ENCODE measurements at regions of chr1 and their contacts with region 1.

Region 1: DNA sequence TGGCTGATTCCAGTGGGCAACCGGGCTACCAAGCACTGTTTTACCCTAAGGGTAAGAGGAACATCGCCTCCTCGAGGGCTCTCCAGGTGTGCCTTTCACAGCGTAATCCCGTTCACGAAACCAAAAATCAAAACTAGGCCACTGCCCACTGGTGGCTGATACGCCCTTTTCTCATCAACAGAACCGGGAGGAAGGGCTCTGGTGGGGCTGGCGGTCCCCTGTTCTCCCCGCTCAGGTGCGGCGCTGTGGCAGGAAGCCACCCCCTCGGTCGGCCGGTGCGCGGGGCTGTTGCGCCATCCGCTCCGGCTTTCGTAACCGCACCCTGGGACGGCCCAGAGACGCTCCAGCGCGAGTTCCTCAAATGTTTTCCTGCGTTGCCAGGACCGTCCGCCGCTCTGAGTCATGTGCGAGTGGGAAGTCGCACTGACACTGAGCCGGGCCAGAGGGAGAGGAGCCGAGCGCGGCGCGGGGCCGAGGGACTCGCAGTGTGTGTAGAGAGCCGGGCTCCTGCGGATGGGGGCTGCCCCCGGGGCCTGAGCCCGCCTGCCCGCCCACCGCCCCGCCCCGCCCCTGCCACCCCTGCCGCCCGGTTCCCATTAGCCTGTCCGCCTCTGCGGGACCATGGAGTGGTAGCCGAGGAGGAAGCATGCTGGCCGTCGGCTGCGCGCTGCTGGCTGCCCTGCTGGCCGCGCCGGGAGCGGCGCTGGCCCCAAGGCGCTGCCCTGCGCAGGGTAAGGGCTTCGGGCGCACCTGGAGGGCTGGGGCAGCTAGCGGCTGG is at the start of gene IL6R:
- DNase-seq: peak in 1 of 2 donors; percentile 97
- H3K4me3 ChIP-seq: peak within 1 kb of the TSS; percentile 55 to 79
- H3K27ac ChIP-seq: peak within 1 kb of the TSS; percentile 95
- H3K4me1 ChIP-seq: peaks cover 45% of the 10 kb centered on the region
- H3K27me3 ChIP-seq: no peaks in the 10 kb centered on the region
- CTCF ChIP-seq: peak in 2 of 3 experiments; percentile 17 to 63
- POLR2A ChIP-seq: peak in 1 of 2 donors; percentile 85
- total RNA-seq, gene IL6R: 50.8 TPM

Region 2: DNA sequence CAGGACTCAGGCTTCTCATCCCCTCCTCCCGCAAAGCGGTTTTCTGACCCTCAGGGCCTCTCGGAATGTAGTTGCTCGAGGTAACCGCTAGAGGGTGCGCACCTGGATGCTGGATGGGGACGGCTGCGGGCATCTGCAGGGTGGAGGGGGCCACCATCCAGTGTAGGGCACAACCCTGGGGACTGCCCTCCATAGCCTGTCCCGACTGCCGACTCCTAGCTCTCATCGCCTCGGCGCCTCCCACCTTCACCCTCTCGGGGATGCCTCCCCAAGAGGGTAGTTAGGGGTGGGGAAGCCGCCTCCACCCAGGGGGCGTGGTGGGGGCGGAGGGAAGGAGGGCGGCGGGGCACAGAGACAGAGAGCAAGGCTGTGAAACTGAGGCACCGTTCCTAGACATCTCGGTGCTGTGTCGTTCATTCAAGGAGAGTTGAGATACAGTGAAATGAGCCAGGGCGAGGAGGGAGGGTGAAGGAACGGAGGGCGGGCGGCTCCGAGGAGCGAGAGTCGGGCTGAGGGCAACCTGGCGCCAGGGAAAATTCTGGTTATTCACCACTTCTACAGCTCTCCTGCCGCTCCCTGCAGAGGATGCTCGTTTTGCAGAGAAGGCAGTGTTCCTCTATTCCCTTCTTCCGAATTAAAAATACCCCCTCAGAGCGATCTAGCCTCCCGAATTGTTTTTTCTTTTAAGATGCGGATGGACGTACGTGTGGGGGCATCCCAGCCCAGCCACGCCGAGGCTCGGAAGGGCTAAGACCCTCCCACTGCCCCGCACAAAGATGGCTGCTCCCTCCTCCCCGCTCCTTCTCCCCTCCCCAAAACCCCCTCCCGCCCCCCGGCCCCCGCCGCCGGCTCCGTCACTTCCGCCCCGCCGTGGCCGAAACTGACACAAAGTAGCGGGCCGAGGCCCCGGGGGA is 80.2 kb before region 1 on chr1 and contains the start of gene ATP8B2:
- intact Hi-C with region 1: loop called (anchors 5 kb)
- DNase-seq: no peak
- H3K4me3 ChIP-seq: peak within 1 kb of the TSS; percentile 64 to 81
- H3K27ac ChIP-seq: peak within 1 kb of the TSS; percentile 98
- H3K4me1 ChIP-seq: peaks cover 39% of the 10 kb centered on the region
- H3K27me3 ChIP-seq: no peaks in the 10 kb centered on the region
- CTCF ChIP-seq: peak; percentile 72 to 93 (median 78)
- POLR2A ChIP-seq: no peak
- total RNA-seq, gene ATP8B2: 65.1 TPM